Heart left ventricle (tissue), 16 donors: ENCODE measurements at regions of chr1 and their contacts with region 1.

Region 1: GRCh38 chr1:7638078-7638477 is 133.0 kb upstream of the VAMP3 start:
- DNase-seq: peak in 1 of 5 donors; percentile 9
- ATAC-seq: no peak
- H3K4me3 ChIP-seq: no peak overlapping the region
- H3K27ac ChIP-seq: no peak overlapping the region
- H3K4me1 ChIP-seq: peaks cover 0 to 9% (median 0%) of the 10 kb centered on the region in 12 donors
- H3K27me3 ChIP-seq: no peaks in the 10 kb centered on the region
- CTCF ChIP-seq: no peak
- POLR2A ChIP-seq: no peak

Region 2: DNA sequence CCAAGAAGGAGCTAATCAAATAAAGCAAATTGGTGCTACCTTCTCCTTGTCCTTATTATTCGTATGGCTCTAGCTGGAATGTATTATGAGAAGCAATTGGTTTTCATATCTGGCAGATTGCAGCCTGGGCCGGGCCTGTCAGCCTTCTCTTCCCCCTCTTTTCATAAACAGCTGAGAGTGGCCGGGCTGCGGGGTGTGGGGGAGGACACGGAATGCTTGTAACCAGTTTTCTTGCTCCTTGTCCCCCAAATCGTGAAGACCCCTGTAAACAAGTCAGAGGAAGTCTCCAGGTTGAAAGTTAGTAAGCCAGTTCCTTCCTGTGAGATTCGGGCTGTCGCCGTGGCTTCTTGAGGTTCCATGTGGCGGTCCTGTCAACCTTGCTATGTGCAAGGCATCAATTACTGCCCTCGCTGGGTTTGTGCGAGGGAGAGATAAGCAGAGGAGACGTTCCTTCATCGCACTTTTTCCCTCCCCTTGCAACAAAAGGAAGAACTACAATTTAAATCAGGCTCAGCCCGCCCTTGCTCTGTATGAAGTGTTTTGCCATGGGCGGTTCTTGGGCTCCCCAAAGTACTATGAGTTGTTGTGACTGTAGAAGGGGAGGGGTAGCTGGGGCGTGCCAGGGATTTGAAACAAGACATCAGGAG is 402.1 kb before region 1 on chr1:
- intact Hi-C with region 1: loop called in 1 of 10 experiments (anchors 5 kb)
- DNase-seq: no peak
- ATAC-seq: no peak
- H3K4me3 ChIP-seq: no peak overlapping the region
- H3K27ac ChIP-seq: no peak overlapping the region
- H3K4me1 ChIP-seq: no peaks in the 10 kb centered on the region
- H3K27me3 ChIP-seq: no peaks in the 10 kb centered on the region
- CTCF ChIP-seq: no peak
- POLR2A ChIP-seq: no peak

Region 3: GRCh38 chr1:7576946-7577641 is 61.0 kb before region 1 on chr1:
- intact Hi-C with region 1: loop called in 2 of 10 experiments (anchors 5 to 10 kb)
- DNase-seq: peak in 2 of 5 donors; percentile 30 to 35
- ATAC-seq: peak in 3 of 4 donors; percentile 39 to 56 (median 40)
- H3K4me3 ChIP-seq: no peak overlapping the region
- H3K27ac ChIP-seq: no peak overlapping the region
- H3K4me1 ChIP-seq: peaks cover 0 to 9% (median 0%) of the 10 kb centered on the region in 12 donors
- H3K27me3 ChIP-seq: no peaks in the 10 kb centered on the region
- CTCF ChIP-seq: peak in 11 of 12 donors; percentile 14 to 51 (median 29)
- POLR2A ChIP-seq: no peak

Region 4: DNA sequence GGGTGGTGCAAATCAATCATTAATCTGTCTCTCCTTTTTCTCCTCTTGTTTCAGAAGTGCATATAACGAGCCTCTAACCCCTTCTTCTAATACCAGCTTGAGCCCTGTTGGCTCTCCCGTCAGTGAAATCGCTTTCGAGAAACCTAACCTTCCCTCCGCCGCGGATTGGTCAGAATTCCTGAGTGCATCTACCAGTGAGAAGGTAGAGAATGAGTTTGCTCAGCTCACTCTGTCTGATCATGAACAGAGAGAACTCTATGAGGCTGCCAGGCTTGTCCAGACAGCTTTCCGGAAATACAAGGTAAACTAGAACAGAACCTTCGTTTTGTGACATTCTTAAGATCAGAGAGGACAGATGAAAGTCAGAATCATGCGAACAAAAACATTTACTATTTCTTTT is 107.7 kb after region 1 on chr1:
- intact Hi-C with region 1: no loop called
- DNase-seq: no peak
- ATAC-seq: no peak
- H3K4me3 ChIP-seq: no peak overlapping the region
- H3K27ac ChIP-seq: no peak overlapping the region
- H3K4me1 ChIP-seq: no peaks in the 10 kb centered on the region
- H3K27me3 ChIP-seq: no peaks in the 10 kb centered on the region
- CTCF ChIP-seq: no peak
- POLR2A ChIP-seq: no peak